ENCODE measurements at regions of chr22 and their contacts with region 1.

Region 1: GRCh38 chr22:26669060-26669481 is 11.7 kb downstream of the MIAT start:
- DNase-seq: peak; percentile 80
- H3K4me3 ChIP-seq: no peak overlapping the region
- H3K27ac ChIP-seq: peak overlapping the region in 1 of 2 experiments; percentile 91; a peak in 2 of 4 replicates
- H3K4me1 ChIP-seq: peaks cover 12 to 38% of the 10 kb centered on the region in 2 experiments; a peak in 2 of 4 replicates
- H3K27me3 ChIP-seq: no peaks in the 10 kb centered on the region
- CTCF ChIP-seq: peak; percentile 42
- EP300 ChIP-seq: peak in 1 of 2 experiments; percentile 47; a peak in 1 of 4 replicates
- RAD21 ChIP-seq: peak; percentile 58

Region 2: GRCh38 chr22:26502688-26503561 is 166.1 kb before region 1 on chr22:
- CTCF ChIA-PET with region 1: interaction called, 16 read pairs
- POLR2A ChIA-PET with region 1: no interaction called
- DNase-seq: peak; percentile 59
- H3K4me3 ChIP-seq: no peak overlapping the region
- H3K27ac ChIP-seq: no peak overlapping the region
- H3K4me1 ChIP-seq: no peaks in the 10 kb centered on the region
- H3K27me3 ChIP-seq: no peaks in the 10 kb centered on the region
- CTCF ChIP-seq: peak; percentile 63
- EP300 ChIP-seq: no peak
- RAD21 ChIP-seq: peak; percentile 65

Region 3: GRCh38 chr22:26679003-26679629 is 10.0 kb after region 1 on chr22:
- CTCF ChIA-PET with region 1: interaction called, 10 read pairs
- POLR2A ChIA-PET with region 1: no interaction called
- DNase-seq: peak; percentile 83
- H3K4me3 ChIP-seq: peak overlapping the region in 1 of 2 experiments; percentile 18; a peak in 1 of 4 replicates
- H3K27ac ChIP-seq: peak overlapping the region in 1 of 2 experiments; percentile 14; a peak in 1 of 4 replicates
- H3K4me1 ChIP-seq: peaks cover 7 to 19% of the 10 kb centered on the region in 2 experiments; a peak in 3 of 4 replicates
- H3K27me3 ChIP-seq: no peaks in the 10 kb centered on the region
- CTCF ChIP-seq: peak; percentile 94
- EP300 ChIP-seq: 0 out of 4 replicates have a peak, but pooled peaks of 1 of the 2 experiments have one; percentile 30
- RAD21 ChIP-seq: peak; percentile 90

Measured in SK-N-SH (cell line).